Heart left ventricle (tissue), 16 donors: ENCODE measurements at regions of chr7 and their contacts with region 1.

Region 1: GRCh38 chr7:94223375-94224070 is 171.2 kb upstream of the COL1A2 start:
- DNase-seq: no peak
- ATAC-seq: peak in 2 of 4 donors; percentile 52
- H3K4me3 ChIP-seq: no peak overlapping the region
- H3K27ac ChIP-seq: no peak overlapping the region
- H3K4me1 ChIP-seq: no peaks in the 10 kb centered on the region
- H3K27me3 ChIP-seq: no peaks in the 10 kb centered on the region
- CTCF ChIP-seq: peak in 11 of 12 donors; percentile 30 to 58 (median 48)
- POLR2A ChIP-seq: no peak

Region 2: GRCh38 chr7:93622036-93623033 is 601.2 kb before region 1 on chr7:
- intact Hi-C with region 1: loop called in 1 of 10 experiments (anchors 5 kb)
- DNase-seq: peak in 1 of 5 donors; percentile 19
- ATAC-seq: peak in 3 of 4 donors; percentile 48 to 73 (median 54)
- H3K4me3 ChIP-seq: no peak overlapping the region
- H3K27ac ChIP-seq: no peak overlapping the region
- H3K4me1 ChIP-seq: peaks cover 0 to 4% (median 0%) of the 10 kb centered on the region in 12 donors
- H3K27me3 ChIP-seq: no peaks in the 10 kb centered on the region
- CTCF ChIP-seq: peak in 7 of 12 donors; percentile 25 to 49 (median 28)
- POLR2A ChIP-seq: no peak

Region 3: GRCh38 chr7:93799750-93800357 is 423.7 kb before region 1 on chr7:
- intact Hi-C with region 1: loop called in 1 of 10 experiments (anchors 5 kb)
- DNase-seq: no peak
- ATAC-seq: no peak
- H3K4me3 ChIP-seq: no peak overlapping the region
- H3K27ac ChIP-seq: no peak overlapping the region
- H3K4me1 ChIP-seq: no peaks in the 10 kb centered on the region
- H3K27me3 ChIP-seq: no peaks in the 10 kb centered on the region
- CTCF ChIP-seq: peak in 10 of 12 donors; percentile 29 to 60 (median 38)
- POLR2A ChIP-seq: no peak

Region 4: DNA sequence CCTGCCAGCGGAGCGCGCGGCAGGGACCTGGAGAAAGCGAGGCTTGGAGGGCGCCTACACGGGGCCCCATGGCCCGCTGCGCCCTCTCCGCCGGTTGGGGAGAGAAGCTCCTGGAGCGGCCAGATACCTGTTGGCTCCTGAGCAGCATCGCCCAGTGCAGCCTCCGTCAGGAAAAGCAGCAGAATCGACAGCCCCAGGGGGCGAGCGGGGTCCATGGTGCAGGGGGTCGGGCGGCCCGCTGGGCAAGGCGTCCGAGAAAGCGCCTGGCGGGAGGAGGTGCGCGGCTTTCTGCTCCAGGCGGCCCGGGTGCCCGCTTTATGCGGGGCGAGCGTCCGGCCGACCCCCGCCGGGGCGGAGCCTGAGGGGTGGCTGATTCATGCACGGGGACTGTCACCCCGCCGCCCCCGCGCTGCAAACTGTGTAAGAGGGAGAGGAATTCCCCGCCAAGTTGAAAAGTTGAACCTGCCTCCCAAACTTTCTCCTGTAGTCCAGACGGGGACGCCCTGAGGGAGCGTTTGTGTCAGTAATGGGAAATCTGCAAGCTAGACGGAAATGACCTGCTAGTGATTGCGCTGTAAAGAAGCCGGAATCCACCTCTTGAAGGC is 333.0 kb before region 1 on chr7 and contains the start of gene TFPI2:
- intact Hi-C with region 1: loop called in 1 of 10 experiments (anchors 5 kb)
- DNase-seq: peak; percentile 25 to 59 (median 43)
- ATAC-seq: peak in 3 of 4 donors; percentile 61 to 69 (median 65)
- H3K4me3 ChIP-seq: peak within 1 kb of the TSS; percentile 50 to 72 (median 62)
- H3K27ac ChIP-seq: peak within 1 kb of the TSS in 7 of 12 donors; percentile 14 to 67 (median 36)
- H3K4me1 ChIP-seq: peaks cover 0 to 24% (median 8%) of the 10 kb centered on the region in 12 donors
- H3K27me3 ChIP-seq: peaks cover 0 to 32% (median 9%) of the 10 kb centered on the region in 9 donors
- CTCF ChIP-seq: peak in 1 of 12 donors; percentile 19
- POLR2A ChIP-seq: peak in 1 of 2 donors; percentile 35
- total RNA-seq, gene TFPI2: 0.92 to 26.8 (median 1.9) TPM

Region 5: GRCh38 chr7:93902777-93903423 is 320.6 kb before region 1 on chr7:
- intact Hi-C with region 1: loop called in 2 of 10 experiments (anchors 5 to 10 kb)
- DNase-seq: peak in 1 of 5 donors; percentile 28
- ATAC-seq: peak; percentile 42 to 60 (median 51)
- H3K4me3 ChIP-seq: no peak overlapping the region
- H3K27ac ChIP-seq: no peak overlapping the region
- H3K4me1 ChIP-seq: peaks cover 0 to 5% (median 0%) of the 10 kb centered on the region in 12 donors
- H3K27me3 ChIP-seq: no peaks in the 10 kb centered on the region
- CTCF ChIP-seq: peak; percentile 62 to 90 (median 79)
- POLR2A ChIP-seq: no peak

Region 6: DNA sequence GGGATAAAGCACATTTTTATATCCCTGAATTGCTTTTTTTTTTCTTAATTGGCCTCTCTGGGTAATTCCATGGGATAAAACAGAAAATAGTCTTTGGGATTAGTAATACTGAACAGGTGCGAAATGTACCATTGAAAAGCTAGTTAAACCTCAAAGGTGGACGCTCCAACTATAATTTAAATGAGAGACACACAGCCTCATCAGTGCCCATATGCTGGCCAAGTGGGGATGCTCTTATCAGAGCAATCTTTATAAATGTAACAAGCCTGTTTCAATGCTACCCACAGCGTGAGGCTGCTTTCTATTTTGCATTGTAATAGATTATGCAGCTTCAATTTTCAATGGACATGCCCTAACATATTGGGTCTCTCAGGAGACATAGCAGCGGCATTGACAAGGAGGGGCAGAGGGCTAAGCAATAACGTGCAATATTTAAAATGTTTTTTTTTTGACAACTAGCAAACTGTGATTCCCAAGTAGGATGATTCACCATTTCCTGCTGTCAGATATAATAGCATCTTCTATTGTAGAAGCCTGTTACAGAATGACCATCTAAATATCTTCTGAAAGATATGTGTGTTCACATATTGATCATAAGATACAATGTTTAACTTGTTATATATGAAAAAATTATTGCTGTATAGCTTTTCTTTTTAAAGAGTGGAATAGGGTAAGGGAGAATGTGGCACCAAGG is 128.1 kb before region 1 on chr7:
- intact Hi-C with region 1: loop called in 1 of 10 experiments (anchors 10 kb)
- DNase-seq: no peak
- ATAC-seq: no peak
- H3K4me3 ChIP-seq: no peak overlapping the region
- H3K27ac ChIP-seq: no peak overlapping the region
- H3K4me1 ChIP-seq: no peaks in the 10 kb centered on the region
- H3K27me3 ChIP-seq: peaks cover 0 to 5% (median 0%) of the 10 kb centered on the region in 9 donors
- CTCF ChIP-seq: no peak
- POLR2A ChIP-seq: no peak

Region 7: GRCh38 chr7:94258418-94259300 is 35.1 kb after region 1 on chr7:
- intact Hi-C with region 1: no loop called
- DNase-seq: no peak
- ATAC-seq: no peak
- H3K4me3 ChIP-seq: no peak overlapping the region
- H3K27ac ChIP-seq: no peak overlapping the region
- H3K4me1 ChIP-seq: no peaks in the 10 kb centered on the region
- H3K27me3 ChIP-seq: no peaks in the 10 kb centered on the region
- CTCF ChIP-seq: no peak
- POLR2A ChIP-seq: no peak